ENCODE measurements at regions of chr7 and their contacts with region 1.

Region 1: GRCh38 chr7:129041142-129042085 is 13.5 kb downstream of the TNPO3 start:
- DNase-seq: no peak
- ATAC-seq: peak; percentile 44
- H3K4me3 ChIP-seq: no peak overlapping the region
- H3K27ac ChIP-seq: peak overlapping the region; percentile 10; the same call in 1 of the 2 replicates
- H3K4me1 ChIP-seq: peaks cover 38% of the 10 kb centered on the region
- H3K27me3 ChIP-seq: no peaks in the 10 kb centered on the region
- CTCF ChIP-seq: no peak
- EP300 ChIP-seq: no peak
- POLR2A ChIP-seq: no peak
- RAD21 ChIP-seq: no peak

Region 2: DNA sequence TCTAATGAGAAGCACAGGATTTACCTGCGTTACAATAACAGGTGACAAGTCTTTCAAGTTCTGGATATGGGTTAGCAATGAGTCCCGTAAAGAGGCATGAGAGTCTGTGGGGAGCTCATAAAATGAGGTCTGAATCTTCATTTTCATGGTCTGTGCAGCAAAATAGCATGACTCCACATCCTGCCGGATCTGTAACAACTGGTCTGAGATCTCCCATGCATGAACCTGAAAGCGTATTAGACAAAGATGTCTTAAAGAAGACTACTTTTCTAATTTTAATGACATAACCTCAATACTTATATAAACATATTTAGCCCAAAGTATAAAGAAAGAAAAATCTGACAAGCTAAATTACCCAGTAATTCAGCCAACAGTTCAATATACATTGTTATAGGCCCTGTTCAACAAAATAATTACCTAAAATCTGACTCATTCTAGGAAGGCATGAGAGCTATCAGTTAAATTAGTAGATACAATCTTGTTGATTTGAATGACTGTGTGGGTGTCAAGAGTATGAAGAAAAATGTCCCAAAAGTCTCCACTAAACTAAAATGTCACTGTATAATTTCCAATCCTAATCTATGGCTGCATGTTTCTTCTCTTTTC is 23.4 kb before region 1 on chr7:
- CTCF ChIA-PET with region 1: interaction called, 4 read pairs
- POLR2A ChIA-PET with region 1: interaction called, 5 read pairs
- RAD21 ChIA-PET with region 1: interaction called, 3 read pairs
- SMC1A ChIA-PET with region 1: interaction called, 10 read pairs
- in situ Hi-C with region 1: no loop called
- intact Hi-C with region 1: no loop called
- DNase-seq: peak; percentile 64
- ATAC-seq: peak; percentile 94
- H3K4me3 ChIP-seq: no peak overlapping the region; the same call in 1 of the 2 replicates
- H3K27ac ChIP-seq: peak overlapping the region; percentile 93
- H3K4me1 ChIP-seq: peaks cover 42% of the 10 kb centered on the region
- H3K27me3 ChIP-seq: no peaks in the 10 kb centered on the region
- CTCF ChIP-seq: no peak
- EP300 ChIP-seq: no peak
- POLR2A ChIP-seq: no peak
- RAD21 ChIP-seq: no peak

Region 3: GRCh38 chr7:129024125-129024524 is 17.3 kb before region 1 on chr7:
- CTCF ChIA-PET with region 1: interaction called, 4 read pairs
- POLR2A ChIA-PET with region 1: interaction called, 5 read pairs
- RAD21 ChIA-PET with region 1: interaction called, 3 read pairs
- SMC1A ChIA-PET with region 1: interaction called, 25 read pairs
- in situ Hi-C with region 1: no loop called
- intact Hi-C with region 1: no loop called
- DNase-seq: no peak
- ATAC-seq: no peak
- H3K4me3 ChIP-seq: no peak overlapping the region
- H3K27ac ChIP-seq: peak overlapping the region; percentile 18
- H3K4me1 ChIP-seq: peaks cover 17% of the 10 kb centered on the region
- H3K27me3 ChIP-seq: no peaks in the 10 kb centered on the region
- CTCF ChIP-seq: no peak
- EP300 ChIP-seq: no peak
- POLR2A ChIP-seq: no peak
- RAD21 ChIP-seq: no peak

Region 4: DNA sequence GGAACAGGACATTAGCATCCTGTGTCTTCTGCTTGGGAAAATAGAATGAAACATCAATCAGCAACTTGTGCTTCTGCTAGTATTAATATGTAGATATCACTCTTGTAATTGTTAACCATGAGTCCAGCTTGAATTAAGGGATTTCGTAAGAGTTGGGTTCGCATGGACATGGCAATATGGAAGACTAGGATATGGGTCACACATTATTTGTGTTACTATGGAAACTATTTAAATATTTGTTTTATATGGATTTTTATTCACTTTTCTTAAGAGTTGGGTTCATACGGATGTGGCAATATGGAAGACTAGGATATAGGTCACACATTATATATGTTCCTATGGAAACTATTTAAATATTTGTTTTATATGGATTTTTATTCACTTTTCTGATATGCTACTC is 11.0 kb before region 1 on chr7:
- CTCF ChIA-PET with region 1: no interaction called
- POLR2A ChIA-PET with region 1: no interaction called
- RAD21 ChIA-PET with region 1: no interaction called
- SMC1A ChIA-PET with region 1: interaction called, 25 read pairs
- in situ Hi-C with region 1: no loop called
- intact Hi-C with region 1: no loop called
- DNase-seq: no peak
- ATAC-seq: no peak
- H3K4me3 ChIP-seq: no peak overlapping the region
- H3K27ac ChIP-seq: no peak overlapping the region
- H3K4me1 ChIP-seq: no peaks in the 10 kb centered on the region; the same call in 1 of the 2 replicates
- H3K27me3 ChIP-seq: no peaks in the 10 kb centered on the region
- CTCF ChIP-seq: no peak
- EP300 ChIP-seq: no peak
- POLR2A ChIP-seq: no peak
- RAD21 ChIP-seq: no peak

Region 5: DNA sequence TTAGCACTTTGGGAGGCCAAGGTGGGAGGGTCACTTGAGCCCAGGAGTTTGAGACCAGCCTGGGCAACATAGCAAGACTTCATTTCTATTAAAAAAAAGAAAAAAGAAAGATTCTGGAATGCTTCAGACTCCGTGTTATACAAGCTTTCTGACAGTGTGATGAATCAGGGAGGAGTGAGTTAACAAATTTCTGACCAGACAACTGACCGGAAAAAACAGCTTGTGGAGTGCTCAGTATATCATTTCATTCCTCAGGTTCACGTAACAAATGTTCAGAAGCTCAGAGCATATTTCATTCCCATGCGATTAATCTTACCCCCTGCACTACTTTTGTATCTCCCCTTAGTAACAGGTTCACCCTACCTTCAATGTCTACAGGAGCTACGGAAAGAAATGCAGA is 42.1 kb after region 1 on chr7:
- CTCF ChIA-PET with region 1: interaction called, 3 read pairs
- POLR2A ChIA-PET with region 1: no interaction called
- RAD21 ChIA-PET with region 1: interaction called, 16 read pairs
- SMC1A ChIA-PET with region 1: interaction called, 11 read pairs
- in situ Hi-C with region 1: no loop called
- intact Hi-C with region 1: no loop called
- DNase-seq: no peak
- ATAC-seq: no peak
- H3K4me3 ChIP-seq: no peak overlapping the region
- H3K27ac ChIP-seq: no peak overlapping the region
- H3K4me1 ChIP-seq: no peaks in the 10 kb centered on the region
- H3K27me3 ChIP-seq: no peaks in the 10 kb centered on the region
- CTCF ChIP-seq: no peak
- EP300 ChIP-seq: no peak
- POLR2A ChIP-seq: no peak
- RAD21 ChIP-seq: no peak